Thyroid gland (tissue), 4 donors: ENCODE measurements at regions of chr3 and their contacts with region 1.

Region 1: DNA sequence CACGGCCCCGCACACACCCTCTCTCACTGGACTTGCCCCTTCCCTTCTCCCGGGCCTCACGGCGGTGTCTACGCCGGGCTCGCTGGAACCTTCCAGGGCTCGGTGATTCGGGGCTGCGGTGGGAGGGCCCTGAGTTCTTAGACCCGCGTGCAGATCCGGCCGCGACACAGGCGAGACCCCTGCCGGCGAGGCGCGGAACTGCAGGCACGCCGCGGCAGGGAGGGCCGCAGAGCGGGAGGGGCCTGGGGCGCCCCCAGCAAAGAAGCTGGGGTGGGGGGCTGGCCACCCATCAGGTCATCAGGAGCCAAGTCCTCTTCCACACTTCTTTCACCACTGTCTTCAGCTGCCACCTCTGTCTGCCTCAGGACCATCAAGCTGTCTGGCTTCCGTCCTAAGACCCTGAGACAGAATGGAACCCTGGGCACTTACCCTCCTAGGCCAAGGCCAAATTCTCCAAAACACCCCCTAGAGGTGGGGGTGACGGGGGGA is 164.5 kb downstream of the XXYLT1 start:
- DNase-seq: peak; percentile 59 to 61
- H3K4me3 ChIP-seq: no peak overlapping the region
- H3K27ac ChIP-seq: no peak overlapping the region
- H3K4me1 ChIP-seq: no peaks in the 10 kb centered on the region
- H3K27me3 ChIP-seq: no peaks in the 10 kb centered on the region
- CTCF ChIP-seq: peak; percentile 82 to 100 (median 98)
- POLR2A ChIP-seq: no peak

Region 2: DNA sequence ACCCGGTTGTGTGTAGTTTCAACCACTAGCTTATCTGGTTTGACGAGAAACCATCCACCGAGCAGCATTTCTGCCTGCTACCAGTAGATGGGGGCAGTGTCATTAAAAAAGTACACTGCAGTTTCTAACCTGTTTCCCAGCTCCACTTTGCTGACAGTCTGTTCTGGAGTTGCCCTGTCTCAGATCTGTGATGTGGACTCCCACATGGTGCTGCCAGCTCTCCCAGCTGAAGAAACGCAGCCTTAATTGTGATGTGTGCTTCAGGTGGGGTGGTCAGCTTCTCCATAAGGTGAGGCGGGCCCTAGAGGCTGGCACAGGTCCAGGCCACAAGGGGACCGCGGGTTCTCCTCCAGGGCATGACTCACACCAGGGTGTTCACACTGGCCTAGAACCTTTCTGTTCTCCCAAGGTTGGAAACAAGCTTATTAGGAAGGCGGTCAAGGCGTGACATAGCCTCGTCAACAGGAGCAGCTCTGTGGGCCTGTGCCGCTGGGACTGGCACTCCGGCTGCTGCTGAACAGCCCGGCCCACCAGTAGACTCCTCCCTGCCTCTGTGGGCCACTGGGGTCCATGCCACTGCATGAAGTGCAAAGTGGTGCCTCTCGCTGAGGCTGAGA is 423.7 kb before region 1 on chr3:
- intact Hi-C with region 1: loop called (anchors 2 kb)
- DNase-seq: peak; percentile 81 to 84
- H3K4me3 ChIP-seq: no peak overlapping the region
- H3K27ac ChIP-seq: no peak overlapping the region
- H3K4me1 ChIP-seq: peaks cover 14 to 26% of the 10 kb centered on the region in 2 donors
- H3K27me3 ChIP-seq: no peaks in the 10 kb centered on the region
- CTCF ChIP-seq: peak; percentile 75 to 99 (median 87)
- POLR2A ChIP-seq: no peak

Region 3: DNA sequence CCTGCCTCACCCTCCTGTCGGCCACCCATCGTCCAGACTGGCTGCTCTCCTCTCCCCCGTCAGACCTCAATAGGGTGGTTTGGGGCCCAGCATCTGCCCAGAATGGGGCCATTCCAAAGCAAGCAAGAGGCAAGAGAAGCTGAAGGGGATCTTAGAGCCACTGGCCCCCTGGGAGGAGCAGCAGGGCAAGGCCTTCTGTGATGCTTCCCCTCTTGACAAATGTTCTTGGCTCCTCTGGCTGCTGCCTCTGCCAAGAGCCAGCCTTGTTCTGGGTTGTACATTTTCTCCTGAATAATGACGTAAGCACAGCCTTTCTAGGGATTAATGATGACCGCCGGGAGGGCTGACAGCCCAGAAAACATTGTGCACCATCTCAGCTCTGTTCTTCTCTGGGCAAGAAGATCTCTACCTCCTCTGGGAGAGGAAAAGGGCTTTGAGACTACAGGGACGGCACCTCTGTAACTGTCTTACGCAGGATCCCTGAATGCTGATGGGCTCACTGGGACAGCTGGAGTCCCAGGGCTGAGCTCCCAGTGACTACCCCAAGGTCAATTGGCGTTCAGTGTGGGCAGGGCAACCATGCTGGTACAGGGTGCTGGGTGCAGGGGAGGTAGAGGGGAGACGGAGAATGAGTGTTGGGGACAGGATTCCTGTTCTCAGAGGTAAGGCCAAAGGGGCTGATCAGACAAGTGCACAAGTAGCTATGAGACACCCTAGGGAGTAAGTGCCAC is 167.5 kb before region 1 on chr3:
- intact Hi-C with region 1: no loop called
- DNase-seq: no peak
- H3K4me3 ChIP-seq: no peak overlapping the region
- H3K27ac ChIP-seq: no peak overlapping the region
- H3K4me1 ChIP-seq: peaks cover 0 to 4% of the 10 kb centered on the region in 2 donors
- H3K27me3 ChIP-seq: no peaks in the 10 kb centered on the region
- CTCF ChIP-seq: no peak
- POLR2A ChIP-seq: no peak

Region 4: GRCh38 chr3:195001961-195002861 is 104.3 kb before region 1 on chr3:
- intact Hi-C with region 1: loop called (anchors 10 kb)
- DNase-seq: peak; percentile 86 to 93
- H3K4me3 ChIP-seq: no peak overlapping the region
- H3K27ac ChIP-seq: peak overlapping the region in 2 of 3 donors; percentile 2 to 14
- H3K4me1 ChIP-seq: peaks cover 22 to 31% of the 10 kb centered on the region in 2 donors
- H3K27me3 ChIP-seq: no peaks in the 10 kb centered on the region
- CTCF ChIP-seq: peak; percentile 46 to 79 (median 70)
- POLR2A ChIP-seq: no peak

Region 5: DNA sequence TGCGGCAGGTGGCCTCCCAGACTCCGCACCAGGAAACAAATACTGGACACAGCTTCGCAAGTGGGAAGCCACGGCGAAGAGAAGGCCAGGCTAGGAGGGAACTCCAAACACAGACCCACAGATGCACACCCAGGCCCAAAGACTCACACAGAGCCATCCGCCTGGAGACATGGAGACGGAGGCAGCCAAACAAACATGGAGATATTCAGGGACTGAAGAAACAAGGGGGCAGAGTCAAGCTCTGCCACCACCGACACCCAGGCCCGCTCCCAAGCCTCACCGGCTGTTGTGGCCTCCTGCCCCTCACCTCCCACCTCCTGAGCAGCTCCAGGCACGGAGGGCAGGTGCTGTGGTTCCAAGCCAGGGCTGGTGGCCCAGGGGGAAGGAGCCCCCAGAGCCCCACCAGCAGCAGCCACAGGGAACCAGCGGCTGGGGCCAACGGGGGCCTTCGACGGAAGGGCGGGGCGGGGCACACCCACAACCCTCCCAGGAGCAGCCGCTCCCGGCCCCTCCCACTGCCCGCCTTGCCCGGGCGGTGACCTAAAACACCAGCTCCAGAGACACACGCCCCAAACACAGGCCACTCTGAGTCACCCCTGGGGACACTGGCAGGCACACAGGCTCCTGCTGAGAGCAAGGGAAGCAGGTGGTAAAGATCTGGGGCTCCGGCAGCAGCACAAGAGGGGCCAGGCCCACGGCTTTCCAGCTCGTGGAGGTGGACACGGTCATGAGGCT is 770.0 kb after region 1 on chr3:
- intact Hi-C with region 1: no loop called
- DNase-seq: no peak
- H3K4me3 ChIP-seq: no peak overlapping the region
- H3K27ac ChIP-seq: no peak overlapping the region
- H3K4me1 ChIP-seq: peaks cover 10 to 23% of the 10 kb centered on the region in 2 donors
- H3K27me3 ChIP-seq: no peaks in the 10 kb centered on the region
- CTCF ChIP-seq: no peak
- POLR2A ChIP-seq: no peak